Endothelial cell of umbilical vein (primary cell): ENCODE measurements at regions of chr18 and their contacts with region 1.

Region 1: DNA sequence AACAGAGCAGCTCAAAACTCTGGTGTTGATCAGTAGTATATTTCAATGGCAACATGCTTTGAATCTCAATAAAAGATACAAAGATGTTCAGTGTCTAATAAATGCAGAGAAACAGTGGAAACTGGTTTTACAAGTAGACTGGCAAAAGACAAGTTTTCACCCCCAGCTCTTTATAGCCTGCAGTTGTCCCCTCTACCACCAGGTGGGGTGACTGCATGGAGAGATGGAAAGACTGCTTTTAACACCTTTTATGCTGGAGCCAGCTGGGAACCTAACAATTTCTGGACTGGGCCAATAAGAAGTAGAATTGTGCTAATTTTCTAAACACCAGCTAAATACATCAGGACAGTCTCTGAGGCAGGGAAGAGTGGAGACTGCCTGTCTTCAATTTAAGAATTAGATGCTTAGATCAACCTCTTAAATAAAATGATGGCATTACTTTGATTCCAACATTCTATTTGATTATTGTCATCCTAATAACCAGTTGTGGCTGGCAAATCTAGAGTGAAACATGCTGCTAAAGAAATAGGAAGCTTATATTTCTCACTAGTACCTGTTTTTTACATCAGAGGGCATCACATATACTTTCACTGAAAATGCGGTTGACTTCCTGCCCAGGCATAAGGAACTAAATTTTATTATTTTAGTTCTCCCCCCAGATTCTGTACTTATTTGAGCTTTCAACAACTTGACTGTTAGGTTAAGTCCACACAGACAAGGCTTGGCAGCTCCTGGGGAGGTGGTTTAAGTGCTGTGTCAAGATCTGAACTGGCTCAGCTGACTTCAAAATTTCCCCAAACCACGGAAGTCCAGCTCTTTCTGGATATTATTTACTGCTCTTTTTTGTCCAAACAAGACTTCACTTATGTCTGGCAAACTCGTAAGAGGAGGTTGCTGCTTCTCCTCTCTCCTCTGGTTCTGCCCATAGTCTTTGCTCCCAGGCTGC is 140.5 kb downstream of the TPGS2 start:
- DNase-seq: peak; percentile 69
- H3K4me3 ChIP-seq: no peak overlapping the region
- H3K27ac ChIP-seq: no peak overlapping the region
- H3K4me1 ChIP-seq: no peaks in the 10 kb centered on the region
- H3K27me3 ChIP-seq: peaks cover 2 to 3% of the 10 kb centered on the region in 2 experiments
- CTCF ChIP-seq: peak; percentile 80 to 86
- POLR2A ChIP-seq: no peak

Region 2: GRCh38 chr18:36667811-36668210 is 20.5 kb before region 1 on chr18:
- CTCF ChIA-PET with region 1: interaction called, 10 read pairs
- POLR2A ChIA-PET with region 1: no interaction called
- dilution Hi-C with region 1: no loop called
- intact Hi-C with region 1: no loop called
- DNase-seq: no peak
- H3K4me3 ChIP-seq: no peak overlapping the region
- H3K27ac ChIP-seq: no peak overlapping the region
- H3K4me1 ChIP-seq: no peaks in the 10 kb centered on the region
- H3K27me3 ChIP-seq: peaks cover 0 to 2% of the 10 kb centered on the region in 2 experiments
- CTCF ChIP-seq: no peak
- POLR2A ChIP-seq: no peak

Region 3: GRCh38 chr18:36711813-36712444 is 23.6 kb after region 1 on chr18:
- CTCF ChIA-PET with region 1: interaction called, 13 read pairs
- POLR2A ChIA-PET with region 1: no interaction called
- dilution Hi-C with region 1: no loop called
- intact Hi-C with region 1: no loop called
- DNase-seq: no peak
- H3K4me3 ChIP-seq: no peak overlapping the region
- H3K27ac ChIP-seq: no peak overlapping the region
- H3K4me1 ChIP-seq: no peaks in the 10 kb centered on the region
- H3K27me3 ChIP-seq: peaks cover 0 to 2% of the 10 kb centered on the region in 2 experiments
- CTCF ChIP-seq: no peak
- POLR2A ChIP-seq: no peak

Region 4: DNA sequence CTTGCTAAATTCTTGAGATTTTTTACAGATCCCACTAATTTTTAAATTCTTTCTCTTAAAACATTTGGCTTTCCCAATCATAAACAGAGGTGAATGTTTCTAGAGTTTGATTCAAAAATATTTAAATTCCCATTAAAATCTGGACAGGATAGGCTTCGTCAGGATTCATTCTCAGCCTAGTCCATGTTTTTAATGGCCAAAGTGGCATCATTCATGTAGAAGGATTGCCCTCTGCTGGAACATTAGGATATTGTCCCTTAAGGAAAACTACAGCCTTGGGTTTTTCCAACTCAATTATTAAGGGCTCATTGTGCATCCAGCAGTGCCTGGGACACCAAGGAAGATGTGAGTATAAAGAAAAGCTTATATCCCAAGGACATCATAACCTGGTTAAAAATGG is 68.8 kb after region 1 on chr18:
- CTCF ChIA-PET with region 1: interaction called, 58 read pairs
- POLR2A ChIA-PET with region 1: no interaction called
- dilution Hi-C with region 1: no loop called
- intact Hi-C with region 1: loop called (anchors 1 kb)
- DNase-seq: peak; percentile 50
- H3K4me3 ChIP-seq: no peak overlapping the region
- H3K27ac ChIP-seq: no peak overlapping the region
- H3K4me1 ChIP-seq: no peaks in the 10 kb centered on the region
- H3K27me3 ChIP-seq: no peaks in the 10 kb centered on the region
- CTCF ChIP-seq: peak; percentile 40 to 54
- POLR2A ChIP-seq: no peak

Region 5: GRCh38 chr18:36809590-36810381 is 121.5 kb after region 1 on chr18:
- CTCF ChIA-PET with region 1: interaction called, 47 read pairs
- POLR2A ChIA-PET with region 1: no interaction called
- dilution Hi-C with region 1: no loop called
- intact Hi-C with region 1: loop called (anchors 1 kb)
- DNase-seq: peak; percentile 66
- H3K4me3 ChIP-seq: no peak overlapping the region
- H3K27ac ChIP-seq: no peak overlapping the region
- H3K4me1 ChIP-seq: no peaks in the 10 kb centered on the region
- H3K27me3 ChIP-seq: no peaks in the 10 kb centered on the region
- CTCF ChIP-seq: peak; percentile 71 to 76
- POLR2A ChIP-seq: no peak

Region 6: GRCh38 chr18:36899289-36899688 is 211.0 kb after region 1 on chr18:
- CTCF ChIA-PET with region 1: interaction called, 21 read pairs
- POLR2A ChIA-PET with region 1: no interaction called
- dilution Hi-C with region 1: no loop called
- intact Hi-C with region 1: loop called (anchors 1 kb)
- DNase-seq: no peak
- H3K4me3 ChIP-seq: no peak overlapping the region
- H3K27ac ChIP-seq: no peak overlapping the region
- H3K4me1 ChIP-seq: peaks cover 7% of the 10 kb centered on the region
- H3K27me3 ChIP-seq: no peaks in the 10 kb centered on the region
- CTCF ChIP-seq: peak; percentile 17 to 20
- POLR2A ChIP-seq: no peak